Aorta (tissue), 5 donors: ENCODE measurements at regions of chr16 and their contacts with region 1.

Region 1: GRCh38 chr16:57519796-57520360 is 16.5 kb downstream of the CCDC102A start:
- DNase-seq: peak; percentile 80 to 94
- ATAC-seq: peak; percentile 77
- H3K4me3 ChIP-seq: no peak overlapping the region
- H3K27ac ChIP-seq: no peak overlapping the region
- H3K4me1 ChIP-seq: no peaks in the 10 kb centered on the region
- H3K27me3 ChIP-seq: no peaks in the 10 kb centered on the region

Region 2: DNA sequence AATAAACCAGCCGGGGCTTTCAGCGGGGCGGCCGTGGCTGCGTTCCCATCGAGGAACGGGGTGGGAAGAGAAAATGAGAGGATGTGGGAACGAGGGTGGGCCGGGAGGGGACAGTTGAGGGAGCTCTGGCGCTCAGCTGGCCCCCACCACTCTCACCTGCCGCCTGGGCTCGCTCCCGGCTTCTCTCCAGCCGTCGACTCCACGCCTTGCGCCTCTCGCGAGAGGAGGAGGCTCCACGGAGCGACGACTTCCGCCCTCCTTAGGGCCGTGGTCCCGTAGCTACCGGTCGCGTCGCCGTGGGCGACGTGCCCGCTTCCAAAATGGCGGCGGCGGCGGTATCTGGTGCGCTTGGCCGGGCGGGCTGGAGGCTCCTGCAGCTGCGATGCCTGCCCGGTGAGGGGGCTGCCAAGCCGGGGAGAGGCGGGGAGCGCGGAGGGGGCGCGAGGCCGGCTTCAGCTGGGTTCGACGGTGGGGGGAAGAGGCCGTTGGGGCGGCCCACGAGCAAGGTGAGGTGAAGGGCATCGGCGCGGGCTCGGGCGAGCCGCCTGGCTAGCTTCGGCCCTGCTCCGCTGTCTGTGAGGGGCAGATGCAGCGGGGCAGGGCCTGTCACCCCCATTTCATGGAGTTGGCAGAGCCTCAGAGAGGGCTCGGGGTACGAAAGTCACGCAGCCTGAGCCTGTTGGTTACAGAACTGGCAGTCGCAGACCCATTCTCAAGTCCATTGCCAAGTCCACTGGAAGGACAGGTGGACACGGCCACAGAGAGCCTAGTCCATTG is 72.5 kb before region 1 on chr16 and contains the starts of genes CIAPIN1 and COQ9:
- intact Hi-C with region 1: loop called in 1 of 2 experiments (anchors 5 kb)
- DNase-seq: peak; percentile 97 to 99
- ATAC-seq: peak; percentile 98
- H3K4me3 ChIP-seq: peak within 1 kb of the TSS; percentile 68 to 88
- H3K27ac ChIP-seq: peak within 1 kb of the TSS; percentile 2 to 60
- H3K4me1 ChIP-seq: no peaks in the 10 kb centered on the region
- H3K27me3 ChIP-seq: no peaks in the 10 kb centered on the region
- total RNA-seq, gene CIAPIN1: 26.7 to 27.4 TPM
- total RNA-seq, gene COQ9: 22.0 to 29.4 TPM

Region 3: DNA sequence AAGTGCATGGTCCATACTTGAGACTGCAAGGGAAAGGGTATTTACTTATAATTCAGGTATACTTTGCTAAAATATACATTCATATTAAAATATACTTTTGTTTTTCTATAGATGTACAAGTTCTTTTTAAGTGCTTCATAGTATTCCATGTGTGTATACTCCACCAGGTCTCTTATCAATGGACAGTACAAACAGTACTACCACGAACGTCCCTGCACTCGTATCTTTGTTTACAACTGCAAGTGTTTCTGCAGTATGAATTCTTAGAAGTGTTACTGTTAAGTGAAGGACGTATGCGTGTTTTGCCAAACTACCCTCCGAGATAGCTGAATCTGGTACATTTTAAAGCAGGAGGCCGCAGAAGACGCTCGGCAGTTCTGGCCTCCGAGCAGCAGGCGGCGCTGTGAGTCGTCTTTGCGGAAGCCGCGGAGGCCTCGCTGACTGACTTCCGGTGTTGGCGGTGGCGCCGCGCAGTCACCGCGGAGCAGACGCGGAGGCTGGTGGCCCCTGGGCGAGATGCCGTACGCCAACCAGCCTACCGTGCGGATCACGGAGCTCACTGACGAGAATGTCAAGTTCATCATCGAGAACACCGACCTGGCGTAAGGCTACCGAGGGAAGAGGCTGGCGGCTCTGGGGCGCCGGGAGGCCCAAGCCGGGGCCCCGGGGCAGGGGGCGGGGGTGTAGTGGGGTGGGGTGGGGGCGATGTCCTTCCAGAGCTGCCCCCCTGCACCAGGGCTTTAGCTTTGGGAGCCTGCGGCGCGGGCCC is 57.5 kb before region 1 on chr16 and contains the start of gene POLR2C:
- intact Hi-C with region 1: loop called (anchors 2 to 5 kb)
- DNase-seq: peak; percentile 93 to 97
- ATAC-seq: peak; percentile 95
- H3K4me3 ChIP-seq: peak within 1 kb of the TSS; percentile 70 to 83
- H3K27ac ChIP-seq: no peak within 1 kb of the TSS
- H3K4me1 ChIP-seq: peaks cover 0 to 3% of the 10 kb centered on the region in 2 donors
- H3K27me3 ChIP-seq: no peaks in the 10 kb centered on the region
- total RNA-seq, gene POLR2C: 43.8 to 49.7 TPM